H1 (cell line): ENCODE measurements at regions of chr11 and their contacts with region 1.

Region 1: DNA sequence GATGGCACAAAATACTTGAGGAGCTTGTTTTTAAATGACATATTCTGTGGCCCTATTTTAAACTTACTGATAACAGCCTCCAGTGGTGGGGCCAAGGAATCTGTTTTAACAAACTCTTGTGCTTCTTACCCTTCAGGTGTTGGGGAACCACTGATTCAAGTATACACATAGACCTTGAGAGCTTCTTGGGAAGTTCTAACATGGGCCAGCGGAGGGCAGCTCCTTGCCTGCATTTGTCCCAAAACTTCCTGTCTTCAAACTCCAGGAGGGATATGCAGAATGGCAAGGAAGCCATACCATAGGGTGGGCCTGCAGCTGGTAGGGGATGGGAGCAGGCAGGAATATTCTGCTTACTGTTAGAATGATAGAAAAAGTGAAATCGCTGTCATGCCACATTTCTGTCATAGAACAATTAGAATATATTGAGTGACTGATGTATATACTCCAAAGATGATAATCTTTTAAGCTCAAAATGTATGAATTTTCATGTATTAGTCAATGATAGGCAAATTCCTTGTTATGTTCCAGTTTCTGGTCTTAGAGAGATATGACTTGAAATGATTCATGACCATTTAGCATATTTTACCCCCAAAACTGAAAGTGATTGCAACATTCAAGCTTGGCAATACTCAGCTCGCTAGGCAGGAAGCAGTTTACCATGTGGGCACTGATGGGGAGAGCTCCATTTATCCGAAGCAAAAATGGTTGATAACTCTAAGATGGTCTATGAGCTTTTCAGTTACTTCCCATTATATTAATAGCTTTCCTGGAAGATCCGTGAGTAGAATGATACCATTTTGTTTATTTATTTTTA is 9.2 kb downstream of the EXT2 start:
- DNase-seq: no peak
- H3K4me3 ChIP-seq: no peak overlapping the region
- H3K27ac ChIP-seq: no peak overlapping the region
- H3K4me1 ChIP-seq: peaks cover 0 to 3% (median 0%) of the 10 kb centered on the region in 4 experiments; a peak in 1 of 7 replicates
- H3K27me3 ChIP-seq: no peaks in the 10 kb centered on the region
- CTCF ChIP-seq: peak; percentile 23 to 48 (median 39)
- EP300 ChIP-seq: no peak
- POLR2A ChIP-seq: no peak
- RAD21 ChIP-seq: peak; percentile 35 to 42

Region 2: DNA sequence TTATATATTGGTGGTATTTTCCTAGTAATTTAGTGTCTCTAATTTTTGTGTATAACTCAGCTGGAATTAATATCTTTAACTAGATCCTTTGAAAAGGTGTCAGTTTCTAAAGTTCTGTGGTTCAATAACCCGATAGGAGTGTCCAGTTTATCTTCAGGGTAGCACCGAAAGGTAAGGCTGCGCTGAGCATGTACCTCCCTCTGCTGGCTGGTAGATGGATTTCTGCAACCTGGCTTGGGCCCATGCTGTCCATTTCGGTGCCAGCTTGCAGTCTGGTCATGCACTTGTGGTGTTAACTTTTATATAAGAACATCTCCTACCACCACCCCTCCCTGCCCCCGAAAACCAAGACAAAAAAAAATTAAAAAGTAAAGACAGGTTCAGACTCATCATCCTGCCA is 15.5 kb after region 1 on chr11:
- CTCF ChIA-PET with region 1: interaction called, 34 read pairs
- POLR2A ChIA-PET with region 1: no interaction called
- DNase-seq: no peak
- H3K4me3 ChIP-seq: no peak overlapping the region
- H3K27ac ChIP-seq: no peak overlapping the region
- H3K4me1 ChIP-seq: no peaks in the 10 kb centered on the region
- H3K27me3 ChIP-seq: no peaks in the 10 kb centered on the region
- CTCF ChIP-seq: peak; percentile 57 to 75 (median 70)
- EP300 ChIP-seq: no peak
- POLR2A ChIP-seq: no peak
- RAD21 ChIP-seq: peak; percentile 61